ENCODE measurements at regions of chr3 and their contacts with region 1.

Region 1: DNA sequence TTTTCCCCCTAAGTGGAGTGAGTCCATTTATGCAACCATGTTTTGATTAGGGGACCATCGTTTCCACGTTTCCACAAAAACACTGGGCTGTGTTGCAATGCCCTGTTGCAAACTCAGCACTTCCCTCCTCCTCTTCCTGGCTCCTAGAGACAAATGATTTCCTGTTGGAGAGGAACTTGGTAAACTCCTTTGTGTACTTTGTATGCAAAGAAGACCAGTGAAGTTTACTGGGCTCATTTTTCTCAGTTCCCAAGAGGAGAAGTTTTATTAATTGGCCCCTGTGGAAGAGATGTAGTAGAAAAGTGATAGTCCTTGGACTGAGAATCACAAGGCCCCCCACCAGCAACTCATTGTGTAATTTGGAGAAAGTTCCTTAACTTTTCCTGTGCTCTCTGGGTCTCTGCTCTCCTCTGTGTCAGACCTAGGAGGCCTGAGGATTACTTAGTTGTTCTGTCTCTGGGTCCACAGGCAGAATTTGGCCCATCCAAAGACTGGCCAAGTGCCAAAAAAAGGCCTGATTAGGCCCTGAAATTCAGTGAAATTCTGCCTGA is 95.0 kb downstream of the ATG7 start:
- DNase-seq: no peak
- H3K4me3 ChIP-seq: no peak overlapping the region
- H3K27me3 ChIP-seq: no peaks in the 10 kb centered on the region
- CTCF ChIP-seq: no peak

Region 2: DNA sequence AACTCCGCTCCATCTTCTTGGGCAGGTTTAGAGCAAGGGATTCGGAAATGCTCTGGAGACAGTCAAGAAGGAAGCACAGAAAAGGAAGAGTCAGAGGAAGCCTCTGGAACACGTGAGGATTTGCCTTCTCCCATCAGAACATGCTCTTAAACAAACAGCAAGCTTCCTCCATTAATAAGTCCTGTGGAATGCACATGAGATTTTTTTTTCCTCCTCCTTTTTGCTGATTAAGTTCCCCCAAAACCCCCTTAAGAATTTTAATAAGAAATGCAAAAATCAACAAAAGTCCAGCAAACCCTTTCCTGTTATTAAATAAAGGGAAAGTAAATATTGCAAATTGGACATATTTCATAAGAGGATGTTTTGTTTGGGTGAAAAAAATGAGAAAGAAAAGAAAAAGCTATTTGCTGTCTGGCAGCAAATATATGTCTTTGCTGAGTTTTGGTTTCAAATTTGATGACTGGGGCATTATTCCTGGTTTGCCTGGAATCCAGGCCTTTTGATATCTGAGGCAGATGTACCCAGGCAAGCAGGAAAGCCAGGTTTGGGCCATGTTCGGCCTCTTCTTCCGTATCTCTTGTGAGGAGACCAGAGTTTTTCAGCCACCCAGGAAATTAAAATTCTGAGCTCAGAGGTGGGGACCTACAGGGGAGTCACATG is 1109.2 kb after region 1 on chr3:
- CTCF ChIA-PET with region 1: no interaction called
- POLR2A ChIA-PET with region 1: interaction called, 14 read pairs
- DNase-seq: peak; percentile 19
- H3K4me3 ChIP-seq: no peak overlapping the region
- H3K27me3 ChIP-seq: no peaks in the 10 kb centered on the region
- CTCF ChIP-seq: no peak